Dendritic cell treated with granulocyte-macrophage colony-stimulating factor and Interleukin-4, amounts not matched to agents 40 ng/mL and 50 ng/mL, for 4 days (primary cell): ENCODE measurements at regions of chr6 and their contacts with region 1.

Region 1: GRCh38 chr6:108558372-108559096 is 2.2 kb upstream of the FOXO3 start:
- H3K4me3 Mint-ChIP-seq: peak overlapping the region; percentile 87
- H3K27ac Mint-ChIP-seq: peak overlapping the region; percentile 93
- H3K4me1 Mint-ChIP-seq: peaks cover 40% of the 10 kb centered on the region
- H3K27me3 Mint-ChIP-seq: peaks cover 14% of the 10 kb centered on the region

Region 2: GRCh38 chr6:108622641-108623298 is 64.2 kb after region 1 on chr6:
- intact Hi-C with region 1: loop called (anchors 2 kb)
- H3K4me3 Mint-ChIP-seq: peak overlapping the region; percentile 77
- H3K27ac Mint-ChIP-seq: peak overlapping the region; percentile 89
- H3K4me1 Mint-ChIP-seq: peaks cover 53% of the 10 kb centered on the region
- H3K27me3 Mint-ChIP-seq: no peaks in the 10 kb centered on the region

Region 3: DNA sequence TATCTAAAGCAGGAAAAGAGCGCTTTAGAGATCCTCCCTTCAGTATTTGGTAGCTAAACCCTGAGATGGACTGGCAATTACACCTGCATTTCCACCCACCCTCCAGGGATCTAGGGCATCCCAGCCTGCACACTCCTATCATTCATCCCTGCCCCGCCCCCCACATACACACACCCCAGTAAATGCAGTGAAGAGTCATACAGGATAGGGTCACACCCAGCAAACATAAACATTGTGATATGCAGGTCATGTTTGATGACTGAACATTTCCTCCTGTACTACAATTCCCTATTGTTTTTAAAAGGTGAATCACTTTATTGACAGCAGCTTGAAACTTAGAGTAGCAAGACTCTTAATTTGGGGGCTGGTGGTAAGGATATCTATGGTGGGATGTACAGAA is 115.1 kb after region 1 on chr6:
- intact Hi-C with region 1: no loop called
- H3K4me3 Mint-ChIP-seq: no peak overlapping the region
- H3K27ac Mint-ChIP-seq: no peak overlapping the region
- H3K4me1 Mint-ChIP-seq: peaks cover 43% of the 10 kb centered on the region
- H3K27me3 Mint-ChIP-seq: no peaks in the 10 kb centered on the region

Region 4: GRCh38 chr6:108896111-108896661 is 337.7 kb after region 1 on chr6:
- intact Hi-C with region 1: loop called (anchors 5 kb)
- H3K4me3 Mint-ChIP-seq: no peak overlapping the region
- H3K27ac Mint-ChIP-seq: peak overlapping the region; percentile 76
- H3K4me1 Mint-ChIP-seq: peaks cover 26% of the 10 kb centered on the region
- H3K27me3 Mint-ChIP-seq: peaks cover 7% of the 10 kb centered on the region

Region 5: DNA sequence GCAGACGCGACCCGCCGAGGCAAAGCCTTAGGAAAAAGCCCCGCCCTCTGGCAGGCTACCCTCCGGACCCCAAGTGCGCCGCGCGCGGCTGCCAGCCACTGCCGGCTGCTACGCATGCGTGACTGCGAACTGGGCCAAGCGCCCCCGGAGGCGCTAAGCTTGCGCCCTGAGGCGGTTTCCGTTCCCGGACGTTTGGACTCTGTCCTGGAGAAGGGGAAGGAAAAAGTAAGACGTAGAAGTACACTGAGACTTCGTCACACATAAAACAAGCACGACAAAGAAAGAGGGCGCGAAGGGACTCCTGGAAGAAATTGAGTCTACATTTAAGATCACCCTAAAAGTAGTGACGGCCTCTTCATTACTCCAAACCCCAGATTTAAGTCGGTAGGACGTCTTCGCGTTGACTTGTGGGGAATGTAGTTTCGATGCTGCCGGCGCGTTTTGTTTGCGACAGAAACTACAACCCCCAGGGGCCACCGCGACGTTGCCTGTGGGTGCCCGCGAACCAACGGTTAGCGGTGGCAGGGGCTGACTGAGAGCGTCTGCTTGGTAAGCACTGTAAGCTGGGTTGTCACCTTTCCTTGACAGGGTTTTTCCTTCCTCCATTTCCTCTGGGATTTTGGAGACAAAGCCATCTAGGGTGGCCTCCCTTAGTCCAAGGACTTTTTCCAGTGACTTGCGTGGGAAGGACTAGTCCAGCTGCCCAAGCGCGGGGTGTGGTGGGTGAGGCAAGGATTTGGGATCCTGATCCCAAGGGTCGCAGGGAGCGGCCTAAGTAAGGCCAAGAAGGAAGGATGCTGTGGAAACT is 536.7 kb after region 1 on chr6 and contains the start of gene CEP57L1:
- intact Hi-C with region 1: loop called (anchors 2 kb)
- H3K4me3 Mint-ChIP-seq: peak within 1 kb of the TSS; percentile 88
- H3K27ac Mint-ChIP-seq: peak within 1 kb of the TSS; percentile 100
- H3K4me1 Mint-ChIP-seq: peaks cover 26% of the 10 kb centered on the region
- H3K27me3 Mint-ChIP-seq: no peaks in the 10 kb centered on the region